Right ventricle myocardium inferior (tissue), 1 donor: ENCODE measurements at regions of chr13 and their contacts with region 1.

Region 1: DNA sequence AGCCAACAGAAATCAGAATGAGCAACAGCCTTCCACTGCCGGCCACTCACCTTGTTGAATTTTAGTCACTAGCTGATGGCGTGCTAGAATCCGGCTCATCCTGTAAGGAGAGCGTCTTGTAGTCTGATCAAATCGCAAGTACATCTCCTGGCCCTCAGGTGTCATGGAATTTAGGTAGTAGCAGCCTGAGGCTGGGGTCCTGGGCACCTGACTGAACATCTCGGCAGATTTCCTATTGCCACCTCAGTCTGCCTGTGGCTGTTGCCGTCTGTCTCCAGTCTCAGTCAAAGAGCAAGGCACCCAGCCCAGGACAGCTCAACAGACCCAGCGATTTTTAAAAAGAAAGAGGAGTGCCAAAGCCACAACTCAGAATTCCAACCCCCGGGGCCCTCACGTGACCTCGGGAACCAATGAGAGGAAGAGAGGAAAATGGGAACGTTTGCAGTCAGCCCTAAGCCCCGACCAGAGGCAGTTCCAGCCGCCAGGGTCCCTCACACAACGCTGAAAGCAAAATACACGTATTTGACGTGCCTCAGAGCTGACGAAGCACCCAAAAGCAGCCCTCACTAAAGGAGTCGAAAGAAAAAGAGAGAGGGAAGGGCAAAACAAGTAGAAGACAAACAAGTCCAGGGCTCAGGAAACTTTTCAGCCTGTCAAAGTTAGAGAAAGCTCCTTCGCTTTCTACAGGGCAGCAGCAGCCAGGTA is at the start of gene STARD13:
- DNase-seq: peak; percentile 94
- ATAC-seq: peak; percentile 96
- total RNA-seq, gene STARD13: 36.4 TPM

Region 2: GRCh38 chr13:33110713-33111413 is 174.7 kb before region 1 on chr13:
- intact Hi-C with region 1: no loop called
- DNase-seq: peak; percentile 88
- ATAC-seq: peak; percentile 55

Region 3: DNA sequence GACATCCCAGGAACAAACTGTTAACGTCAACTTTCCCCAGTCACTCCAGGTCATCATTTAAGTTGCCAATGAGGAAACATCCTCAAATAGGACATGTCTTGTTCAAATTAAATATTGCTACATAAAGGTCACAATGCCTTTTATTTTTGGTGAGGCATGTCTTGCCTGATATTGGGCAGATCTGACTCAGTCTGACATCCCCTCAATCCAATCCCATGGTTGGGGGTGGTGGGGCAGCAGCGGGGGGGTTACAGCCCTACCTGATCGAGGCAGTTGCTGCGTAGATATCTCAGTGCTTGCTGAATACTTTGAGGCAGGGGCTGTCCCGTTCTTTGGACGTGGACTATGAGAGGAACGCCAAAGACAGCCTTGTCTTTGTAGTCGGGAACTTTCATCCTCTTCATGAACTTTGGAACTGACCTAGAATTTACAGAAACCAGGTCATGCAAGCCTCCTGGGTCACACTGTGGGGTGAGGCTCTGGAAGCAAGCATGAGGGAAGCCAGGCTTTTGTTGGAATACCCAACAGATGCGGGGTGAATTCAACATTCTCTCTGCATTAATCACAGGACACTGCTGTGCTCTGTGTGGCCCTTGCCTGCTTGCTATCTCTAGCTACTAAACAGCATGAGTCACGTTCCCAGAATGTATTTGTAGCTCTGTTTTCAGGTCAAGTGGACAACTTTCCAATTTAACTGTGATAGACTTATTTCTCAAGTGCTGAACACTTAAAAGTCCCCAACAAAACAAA is 159.6 kb before region 1 on chr13:
- intact Hi-C with region 1: loop called (anchors 5 kb)
- DNase-seq: peak; percentile 59
- ATAC-seq: peak; percentile 92

Region 4: DNA sequence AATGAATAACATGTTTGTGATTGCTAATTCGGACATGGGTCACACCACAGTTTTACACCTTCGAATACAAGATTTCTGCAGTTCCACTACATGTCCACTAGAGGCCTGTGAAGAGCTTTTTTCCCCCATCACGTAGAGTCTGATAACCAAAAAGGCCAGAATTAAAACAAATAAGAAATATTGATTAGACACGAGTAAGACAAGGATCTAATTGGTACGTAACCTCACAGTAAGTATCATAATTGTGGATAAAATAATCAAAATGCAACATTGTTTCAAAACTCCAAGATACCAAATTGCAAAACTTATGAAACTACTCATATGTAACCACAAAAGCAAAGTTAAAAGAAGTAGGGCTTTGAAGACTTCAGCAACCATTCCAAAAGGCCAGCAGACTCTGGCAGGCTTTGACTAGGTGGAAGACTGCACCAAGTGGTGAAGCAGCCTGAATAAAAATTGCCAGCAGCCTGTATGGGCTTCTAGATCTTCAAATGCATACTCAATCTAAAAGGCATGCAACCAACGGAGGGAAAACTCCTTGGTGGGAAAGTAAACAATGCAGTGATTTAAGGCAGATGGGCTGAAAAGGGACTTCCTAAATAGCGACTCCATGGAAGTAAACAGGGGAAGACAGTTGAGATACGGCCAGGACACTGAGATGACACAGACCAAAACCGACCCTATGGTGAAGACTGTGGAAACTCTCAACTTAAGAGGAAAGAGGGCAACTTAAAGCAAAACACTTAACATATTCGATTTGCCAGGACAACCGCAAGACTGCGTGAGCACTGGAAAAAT is 56.7 kb before region 1 on chr13:
- intact Hi-C with region 1: loop called (anchors 2 kb)
- DNase-seq: no peak
- ATAC-seq: peak; percentile 9

Region 5: GRCh38 chr13:33260168-33261098 is 25.1 kb before region 1 on chr13:
- intact Hi-C with region 1: loop called (anchors 2 kb)
- DNase-seq: no peak
- ATAC-seq: no peak